PC-9 (cell line): ENCODE measurements at regions of chr1 and their contacts with region 1.

Region 1: GRCh38 chr1:31548907-31549808 is 27.2 kb upstream of the TINAGL1 start:
- DNase-seq: peak; percentile 93
- H3K4me3 ChIP-seq: peak overlapping the region; percentile 51
- H3K27ac ChIP-seq: peak overlapping the region; percentile 45
- H3K4me1 ChIP-seq: peaks cover 27% of the 10 kb centered on the region
- H3K27me3 ChIP-seq: no peaks in the 10 kb centered on the region
- CTCF ChIP-seq: peak; percentile 100

Region 2: DNA sequence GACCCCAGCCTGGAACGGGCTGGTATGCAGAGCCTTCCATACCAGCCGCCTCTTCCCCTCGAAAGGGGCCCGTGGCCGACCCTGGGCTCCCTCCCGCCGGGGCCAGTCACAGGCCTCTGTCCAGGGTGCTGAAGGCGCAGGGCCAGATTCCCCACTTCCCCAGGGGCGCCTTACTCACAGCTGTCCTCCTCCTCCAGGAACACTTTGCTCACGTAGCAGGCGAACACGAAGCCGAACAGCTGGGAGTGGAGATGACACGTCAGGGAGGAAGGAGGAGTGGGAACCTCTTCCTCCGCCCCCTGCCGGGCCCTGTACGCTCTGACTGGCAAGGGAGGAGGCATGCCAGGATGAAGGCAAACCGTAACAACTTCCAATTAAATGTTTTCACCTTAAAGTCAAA is 366.8 kb before region 1 on chr1:
- CTCF ChIA-PET with region 1: interaction called, 5 read pairs
- POLR2A ChIA-PET with region 1: no interaction called
- intact Hi-C with region 1: loop called (anchors 1 kb)
- DNase-seq: peak; percentile 73 to 77
- H3K4me3 ChIP-seq: no peak overlapping the region; the same call in 1 of the 2 replicates
- H3K27ac ChIP-seq: no peak overlapping the region
- H3K4me1 ChIP-seq: no peaks in the 10 kb centered on the region
- H3K27me3 ChIP-seq: no peaks in the 10 kb centered on the region
- CTCF ChIP-seq: peak; percentile 52

Region 3: GRCh38 chr1:31394628-31395193 is 154.4 kb before region 1 on chr1:
- CTCF ChIA-PET with region 1: interaction called, 3 read pairs
- POLR2A ChIA-PET with region 1: no interaction called
- intact Hi-C with region 1: loop called (anchors 1 kb)
- DNase-seq: peak; percentile 76 to 88
- H3K4me3 ChIP-seq: peak overlapping the region; percentile 33; the same call in 1 of the 2 replicates
- H3K27ac ChIP-seq: no peak overlapping the region
- H3K4me1 ChIP-seq: peaks cover 30% of the 10 kb centered on the region
- H3K27me3 ChIP-seq: no peaks in the 10 kb centered on the region
- CTCF ChIP-seq: peak; percentile 78

Region 4: GRCh38 chr1:31422505-31423319 is 126.4 kb before region 1 on chr1:
- CTCF ChIA-PET with region 1: interaction called, 4 read pairs
- POLR2A ChIA-PET with region 1: no interaction called
- intact Hi-C with region 1: loop called (anchors 1 kb)
- DNase-seq: peak; percentile 81 to 82
- H3K4me3 ChIP-seq: no peak overlapping the region
- H3K27ac ChIP-seq: peak overlapping the region; percentile 82
- H3K4me1 ChIP-seq: peaks cover 27% of the 10 kb centered on the region
- H3K27me3 ChIP-seq: no peaks in the 10 kb centered on the region
- CTCF ChIP-seq: peak; percentile 86

Region 5: DNA sequence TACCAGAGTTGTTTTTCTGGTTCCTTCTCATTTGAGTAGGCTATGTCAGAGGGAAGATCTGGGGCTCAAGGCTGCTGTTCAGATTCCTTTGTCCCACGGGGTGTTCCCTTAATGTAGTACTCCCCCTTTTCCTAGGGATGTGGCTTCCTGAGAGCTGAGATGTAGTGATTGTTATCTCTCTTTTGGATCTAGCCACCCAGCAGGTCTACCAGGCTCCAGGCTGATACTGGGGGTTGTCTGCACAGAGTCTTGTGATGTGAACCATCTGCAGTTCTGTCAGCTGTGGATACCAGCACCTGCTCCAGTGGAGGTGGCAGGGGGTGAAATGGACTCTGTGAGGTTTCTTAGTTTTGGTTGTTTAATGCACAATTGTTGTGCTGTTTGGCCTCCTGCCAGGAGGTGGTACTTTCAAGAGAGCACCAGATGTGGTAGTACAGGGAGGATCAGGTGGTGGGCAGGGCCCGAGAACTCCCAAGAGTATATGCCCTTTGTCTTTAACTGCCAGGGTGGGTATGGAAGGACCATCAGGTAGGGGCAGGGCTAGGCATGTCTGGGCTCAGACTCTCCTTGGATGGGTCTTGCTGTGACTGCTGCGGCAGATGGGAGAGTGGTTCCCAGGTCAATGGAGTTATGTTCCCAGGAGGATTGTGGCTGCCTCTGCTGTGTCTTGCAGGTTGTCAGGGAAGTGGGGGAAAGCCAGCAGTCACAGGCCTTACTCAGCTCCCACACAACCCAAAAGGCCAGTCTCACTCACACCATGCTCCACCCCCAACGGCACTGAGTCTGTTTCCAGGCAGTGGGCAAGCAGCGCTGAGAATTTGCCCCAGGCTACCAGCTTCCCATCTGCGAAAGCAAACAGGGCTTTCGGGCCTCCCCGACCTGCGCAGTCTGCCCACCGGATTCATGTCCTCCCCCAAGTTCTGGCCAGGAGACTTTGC is 72.0 kb before region 1 on chr1:
- CTCF ChIA-PET with region 1: interaction called, 3 read pairs
- POLR2A ChIA-PET with region 1: no interaction called
- intact Hi-C with region 1: loop called (anchors 1 kb)
- DNase-seq: peak; percentile 84 to 93
- H3K4me3 ChIP-seq: no peak overlapping the region
- H3K27ac ChIP-seq: peak overlapping the region; percentile 91
- H3K4me1 ChIP-seq: peaks cover 34% of the 10 kb centered on the region
- H3K27me3 ChIP-seq: no peaks in the 10 kb centered on the region
- CTCF ChIP-seq: no peak

Region 6: GRCh38 chr1:32159189-32159885 is 610.2 kb after region 1 on chr1:
- CTCF ChIA-PET with region 1: no interaction called
- POLR2A ChIA-PET with region 1: no interaction called
- intact Hi-C with region 1: no loop called
- DNase-seq: no peak
- H3K4me3 ChIP-seq: no peak overlapping the region
- H3K27ac ChIP-seq: no peak overlapping the region
- H3K4me1 ChIP-seq: peaks cover 8% of the 10 kb centered on the region
- H3K27me3 ChIP-seq: no peaks in the 10 kb centered on the region
- CTCF ChIP-seq: no peak